Mammary epithelial cell (primary cell): ENCODE measurements at regions of chr20 and their contacts with region 1.

Region 1: DNA sequence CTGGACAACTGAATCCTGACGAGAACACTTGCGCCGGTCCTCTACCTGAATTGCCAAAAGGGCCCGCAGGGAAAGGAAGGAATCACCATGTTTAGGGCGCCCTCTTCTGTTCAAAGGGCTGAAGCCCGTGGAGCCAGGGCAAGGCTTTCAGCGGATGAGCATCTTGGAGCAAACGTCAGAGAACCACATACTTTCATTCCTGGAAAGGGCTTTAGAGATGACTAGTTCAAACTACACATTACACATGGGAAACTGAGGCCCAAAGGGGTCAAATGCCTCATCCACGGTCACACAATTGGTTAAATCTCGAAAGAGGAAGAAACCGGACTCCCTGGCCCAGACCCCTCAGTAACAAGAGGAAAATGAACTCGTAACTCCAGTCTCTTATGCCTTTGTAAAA is 11.5 kb upstream of the ZNF133 start:
- DNase-seq: peak; percentile 73
- H3K4me3 ChIP-seq: no peak overlapping the region
- H3K27ac ChIP-seq: no peak overlapping the region
- H3K4me1 ChIP-seq: peaks cover 3% of the 10 kb centered on the region
- H3K27me3 ChIP-seq: no peaks in the 10 kb centered on the region
- CTCF ChIP-seq: peak; percentile 95 to 96

Region 2: DNA sequence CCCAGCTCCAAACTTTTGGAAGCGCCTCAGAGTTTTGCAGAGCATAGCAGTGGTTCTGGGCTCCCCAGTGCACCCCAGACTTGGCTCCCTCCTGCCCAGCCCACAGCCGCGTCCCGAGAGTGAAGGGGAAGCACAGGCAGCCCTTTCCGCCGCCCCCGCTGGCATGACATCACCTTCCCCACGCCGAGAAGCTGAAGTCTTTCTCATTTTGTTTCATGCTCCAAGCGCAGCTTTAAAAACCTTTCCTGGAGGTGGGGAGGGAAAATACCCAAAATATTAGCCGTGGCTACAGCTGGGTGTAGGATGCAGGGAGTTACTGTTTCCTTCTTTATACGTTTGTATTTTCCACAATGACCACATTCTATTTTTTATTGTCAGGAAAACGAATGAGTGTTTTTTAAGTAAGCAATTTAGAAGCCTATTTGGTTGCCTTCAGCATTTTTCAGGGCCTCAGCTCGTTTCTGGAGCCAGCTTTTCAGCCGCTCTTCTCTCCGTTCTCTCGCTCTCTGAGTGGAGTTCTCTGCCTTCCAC is 381.1 kb before region 1 on chr20:
- CTCF ChIA-PET with region 1: no interaction called
- dilution Hi-C with region 1: no loop called
- in situ Hi-C with region 1: no loop called
- intact Hi-C with region 1: no loop called
- DNase-seq: peak; percentile 73
- H3K4me3 ChIP-seq: peak overlapping the region; percentile 37 to 50 (median 40)
- H3K27ac ChIP-seq: peak overlapping the region; percentile 61
- H3K4me1 ChIP-seq: peaks cover 34% of the 10 kb centered on the region
- H3K27me3 ChIP-seq: no peaks in the 10 kb centered on the region
- CTCF ChIP-seq: no peak

Region 3: DNA sequence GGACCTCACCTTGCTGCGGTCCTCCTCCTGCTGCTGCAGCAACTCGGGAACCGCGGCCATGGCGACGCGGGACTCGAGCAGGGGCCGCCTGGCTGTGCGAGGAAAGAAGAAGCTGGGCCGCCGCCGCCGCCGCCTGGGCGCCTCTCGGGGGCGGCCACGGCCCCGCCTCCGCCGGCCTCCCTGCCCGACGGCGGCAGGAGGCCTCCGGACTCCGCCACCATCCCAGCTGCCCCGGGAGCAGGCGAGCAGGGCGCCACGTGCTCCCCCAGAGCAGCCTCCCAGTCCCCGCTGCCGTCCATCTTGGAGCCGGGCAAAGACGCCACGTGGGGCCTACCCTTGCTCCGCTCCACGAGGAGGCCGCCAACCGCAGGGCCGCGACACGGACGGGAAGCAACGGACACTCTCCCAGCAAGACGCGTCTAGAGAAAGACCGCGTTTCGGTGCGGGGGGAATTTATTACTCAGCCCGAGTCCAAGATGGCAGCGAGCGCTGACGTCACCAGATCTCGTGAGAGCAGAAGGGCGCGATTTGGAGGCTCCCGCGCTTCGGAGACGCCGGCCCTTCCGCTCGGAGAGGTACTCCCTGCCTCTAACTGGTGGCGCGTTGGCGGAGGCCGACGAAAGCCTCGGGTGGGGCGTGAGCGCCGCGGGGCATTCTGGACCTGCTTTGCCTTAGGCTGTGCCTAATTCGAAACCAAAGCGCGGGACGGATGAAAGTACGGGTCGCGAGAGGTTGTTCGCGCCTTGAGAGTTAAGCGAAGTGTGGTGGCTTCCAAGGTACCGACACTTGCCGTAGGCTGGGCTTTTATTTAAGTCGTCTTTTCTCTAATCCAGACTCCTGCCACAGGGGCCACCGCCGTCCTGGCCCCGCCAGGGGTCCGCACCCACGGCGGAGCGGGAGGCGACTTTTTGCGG is 308.2 kb before region 1 on chr20 and contains the starts of genes MGME1 and SNX5:
- CTCF ChIA-PET with region 1: no interaction called
- dilution Hi-C with region 1: no loop called
- in situ Hi-C with region 1: loop called in 1 of 2 experiments (anchors 25 kb)
- intact Hi-C with region 1: loop called (anchors 2 kb)
- DNase-seq: peak; percentile 99
- H3K4me3 ChIP-seq: peak within 1 kb of the TSS; percentile 88 to 93 (median 91)
- H3K27ac ChIP-seq: peak within 1 kb of the TSS; percentile 98
- H3K4me1 ChIP-seq: peaks cover 26% of the 10 kb centered on the region
- H3K27me3 ChIP-seq: no peaks in the 10 kb centered on the region
- CTCF ChIP-seq: no peak
- total RNA-seq, gene MGME1: 15.8 to 36.2 TPM
- total RNA-seq, gene SNX5: 68.0 to 137 TPM

Region 4: DNA sequence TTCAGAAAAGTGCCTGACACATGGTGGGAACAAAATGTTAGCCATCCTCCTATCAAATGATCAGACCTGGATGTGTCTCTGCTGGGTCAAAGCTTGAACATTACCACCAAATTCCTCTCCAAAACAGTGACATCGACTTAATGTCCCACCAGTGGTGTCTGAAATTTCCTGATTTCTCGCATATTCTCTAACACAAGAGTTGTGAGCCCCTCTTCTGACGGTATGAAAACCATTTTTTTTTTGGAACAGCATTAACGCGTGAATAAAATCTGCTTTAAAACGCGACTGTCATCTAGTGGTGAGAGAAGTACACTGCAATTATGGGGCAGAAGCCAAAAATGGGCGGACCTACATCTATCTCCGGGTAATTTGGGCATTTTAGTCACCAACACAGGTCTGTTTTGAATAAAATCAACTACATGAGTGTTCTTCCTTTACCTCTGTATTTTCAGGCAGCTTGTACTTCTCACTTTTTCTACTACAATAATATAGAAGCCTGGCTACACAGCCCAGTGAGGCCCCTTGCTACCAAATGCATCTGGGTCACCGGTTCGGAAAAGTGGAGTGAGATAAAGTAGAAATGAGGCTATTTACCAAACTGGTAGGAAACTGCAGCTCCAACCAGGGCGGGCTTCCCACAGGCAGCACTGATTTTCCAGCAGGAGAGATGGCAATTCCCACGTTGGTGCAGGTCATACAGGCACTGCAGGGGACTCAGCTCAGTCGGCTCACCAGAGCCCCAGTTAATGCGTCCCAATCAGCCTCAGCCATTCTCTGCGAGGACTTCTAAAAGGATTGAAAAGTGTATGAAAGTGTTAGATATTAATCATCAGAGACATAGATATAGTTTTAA is 280.6 kb before region 1 on chr20:
- CTCF ChIA-PET with region 1: no interaction called
- dilution Hi-C with region 1: no loop called
- in situ Hi-C with region 1: no loop called
- intact Hi-C with region 1: loop called (anchors 1 kb)
- DNase-seq: peak; percentile 55
- H3K4me3 ChIP-seq: no peak overlapping the region
- H3K27ac ChIP-seq: no peak overlapping the region
- H3K4me1 ChIP-seq: peaks cover 14% of the 10 kb centered on the region
- H3K27me3 ChIP-seq: no peaks in the 10 kb centered on the region
- CTCF ChIP-seq: peak; percentile 98 to 100

Region 5: DNA sequence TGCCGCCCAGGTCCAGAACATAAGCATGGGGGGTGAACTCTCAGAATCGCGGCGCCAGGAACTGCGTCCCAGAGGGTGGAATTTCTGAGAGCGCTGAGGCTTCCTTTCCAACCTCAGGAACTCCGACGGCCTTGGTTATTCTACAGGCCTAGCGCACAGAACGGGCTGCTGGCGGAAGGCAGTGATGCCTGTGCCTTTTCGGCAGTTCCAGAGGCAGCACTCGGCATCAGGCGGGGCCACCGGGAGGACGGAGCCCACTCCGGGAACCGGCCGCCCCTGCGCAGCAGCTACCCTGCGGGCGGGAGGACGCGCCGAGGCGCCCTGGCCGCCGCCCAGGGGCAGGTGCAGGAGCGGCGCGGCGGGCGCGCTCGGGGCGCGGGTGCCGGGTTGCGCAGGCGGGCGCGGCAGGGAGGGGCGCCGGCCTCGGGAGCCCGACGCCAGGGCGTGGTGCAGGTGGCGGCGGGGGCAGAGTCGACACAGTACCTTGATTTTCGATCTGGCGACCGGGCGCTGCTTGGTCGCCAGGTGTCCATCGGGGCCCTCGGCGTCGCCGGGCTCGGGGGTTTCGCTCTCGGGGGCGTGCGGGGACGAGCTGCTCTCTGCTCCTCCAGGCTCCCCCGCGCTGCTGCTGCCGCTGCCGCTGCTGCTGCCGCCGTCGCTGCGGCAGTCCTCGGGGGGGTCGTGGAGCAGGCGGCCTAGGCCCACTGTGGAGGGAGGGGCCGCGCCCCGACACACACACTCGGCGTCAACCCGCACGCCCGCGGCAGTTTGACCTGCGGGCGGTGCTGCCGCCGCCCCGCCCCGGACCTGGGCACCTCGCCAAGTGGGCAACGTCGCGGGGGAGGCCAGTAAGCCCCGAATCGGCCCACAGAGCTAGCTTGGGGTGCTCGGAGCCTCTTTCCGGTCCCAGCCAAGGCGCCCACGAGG is 220.4 kb before region 1 on chr20:
- CTCF ChIA-PET with region 1: no interaction called
- dilution Hi-C with region 1: no loop called
- in situ Hi-C with region 1: no loop called
- intact Hi-C with region 1: loop called (anchors 1 kb)
- DNase-seq: peak; percentile 8
- H3K4me3 ChIP-seq: peak overlapping the region; percentile 58 to 82 (median 77)
- H3K27ac ChIP-seq: no peak overlapping the region
- H3K4me1 ChIP-seq: peaks cover 22% of the 10 kb centered on the region
- H3K27me3 ChIP-seq: no peaks in the 10 kb centered on the region
- CTCF ChIP-seq: no peak

Region 6: GRCh38 chr20:18197382-18198131 is 79.3 kb before region 1 on chr20:
- CTCF ChIA-PET with region 1: no interaction called
- dilution Hi-C with region 1: no loop called
- in situ Hi-C with region 1: no loop called
- intact Hi-C with region 1: loop called (anchors 1 kb)
- DNase-seq: peak; percentile 98
- H3K4me3 ChIP-seq: no peak overlapping the region
- H3K27ac ChIP-seq: peak overlapping the region; percentile 96
- H3K4me1 ChIP-seq: peaks cover 11% of the 10 kb centered on the region
- H3K27me3 ChIP-seq: no peaks in the 10 kb centered on the region
- CTCF ChIP-seq: peak; percentile 45 to 47